ENCODE measurements at regions of chr3 and their contacts with region 1.

Region 1: GRCh38 chr3:133910422-133910821 is 14.7 kb upstream of the RAB6B start:
- DNase-seq: no peak
- ATAC-seq: no peak
- H3K4me3 ChIP-seq: no peak overlapping the region
- H3K27ac ChIP-seq: no peak overlapping the region
- H3K4me1 ChIP-seq: no peaks in the 10 kb centered on the region
- H3K27me3 ChIP-seq: peaks cover 20% of the 10 kb centered on the region
- CTCF ChIP-seq: no peak
- POLR2A ChIP-seq: no peak
- RAD21 ChIP-seq: no peak

Region 2: GRCh38 chr3:133448478-133449122 is 461.8 kb before region 1 on chr3:
- CTCF ChIA-PET with region 1: no interaction called
- POLR2A ChIA-PET with region 1: no interaction called
- dilution Hi-C with region 1: no loop called
- in situ Hi-C with region 1: no loop called
- intact Hi-C with region 1: loop called (anchors 10 kb)
- DNase-seq: no peak
- ATAC-seq: no peak
- H3K4me3 ChIP-seq: no peak overlapping the region
- H3K27ac ChIP-seq: no peak overlapping the region
- H3K4me1 ChIP-seq: no peaks in the 10 kb centered on the region; the same call in 1 of the 2 replicates
- H3K27me3 ChIP-seq: peaks cover 13% of the 10 kb centered on the region
- CTCF ChIP-seq: no peak
- POLR2A ChIP-seq: no peak
- RAD21 ChIP-seq: no peak